ENCODE measurements at regions of chr16 and their contacts with region 1.

Region 1: DNA sequence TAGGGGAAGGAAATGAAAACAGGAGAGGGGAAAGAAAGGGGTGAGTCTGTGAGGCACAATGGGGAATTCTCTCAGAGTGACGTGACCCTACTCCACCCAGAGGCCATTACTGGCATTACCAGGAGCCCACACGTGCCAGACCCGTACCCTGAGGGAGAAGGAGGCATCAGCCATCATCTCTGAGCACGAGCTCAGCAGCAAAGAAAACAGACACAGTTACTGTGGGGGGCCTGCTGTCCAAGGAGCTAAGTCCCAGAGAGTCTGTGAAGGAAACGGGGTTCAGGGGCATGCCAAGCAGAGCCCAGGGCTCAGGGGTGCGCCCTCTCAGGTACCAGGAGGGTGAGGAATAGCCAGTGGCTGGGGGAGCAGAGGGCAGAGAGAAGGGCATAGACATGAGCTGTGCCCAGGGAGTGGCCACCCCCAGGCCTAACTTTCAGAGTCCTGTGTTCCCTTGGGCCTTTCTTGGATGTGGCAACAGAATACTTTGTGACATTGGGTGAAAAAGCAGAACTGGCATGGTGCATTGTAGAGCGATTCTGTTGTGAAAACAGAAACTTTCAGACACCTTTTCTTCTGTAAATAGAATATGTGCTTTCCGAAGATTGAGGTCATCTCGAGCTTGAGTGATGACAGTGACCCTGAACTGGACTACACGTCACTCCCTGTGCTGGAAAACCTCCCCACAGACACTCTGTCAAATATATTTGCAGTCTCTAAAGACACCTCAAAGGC is 11.3 kb downstream of the TAF1C start:
- DNase-seq: peak in 3 of 5 donors; percentile 51 to 78 (median 61)
- H3K4me3 ChIP-seq: no peak overlapping the region
- H3K27ac ChIP-seq: peak overlapping the region in 1 of 2 donors; percentile 44
- H3K4me1 ChIP-seq: peaks cover 16% of the 10 kb centered on the region
- H3K27me3 ChIP-seq: no peaks in the 10 kb centered on the region
- CTCF ChIP-seq: peak in 1 of 3 donors; percentile 68
- EP300 ChIP-seq: no peak
- POLR2A ChIP-seq: peak; percentile 16

Region 2: DNA sequence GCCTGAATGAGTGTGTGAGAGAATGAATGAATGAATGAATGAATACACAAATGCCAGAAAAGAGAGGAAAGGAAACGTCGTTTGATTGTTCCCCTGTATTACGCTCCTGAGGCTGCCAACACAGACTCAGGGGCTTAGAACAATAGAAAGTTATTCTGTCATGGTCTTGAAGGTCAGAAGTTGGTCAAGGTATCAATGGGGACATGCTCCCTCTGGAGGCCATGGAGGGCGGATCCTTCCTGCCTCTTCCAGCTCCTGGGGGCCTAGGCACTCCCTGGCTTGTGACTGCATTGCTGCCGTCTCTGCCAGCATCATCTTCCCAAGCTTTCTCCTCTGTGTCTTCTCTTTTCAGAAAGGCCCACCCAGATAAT is 131.4 kb before region 1 on chr16:
- intact Hi-C with region 1: no loop called
- DNase-seq: no peak
- H3K4me3 ChIP-seq: no peak overlapping the region
- H3K27ac ChIP-seq: no peak overlapping the region
- H3K4me1 ChIP-seq: no peaks in the 10 kb centered on the region
- H3K27me3 ChIP-seq: no peaks in the 10 kb centered on the region
- CTCF ChIP-seq: no peak
- EP300 ChIP-seq: no peak
- POLR2A ChIP-seq: no peak

Region 3: GRCh38 chr16:84084570-84085270 is 90.8 kb before region 1 on chr16:
- intact Hi-C with region 1: loop called (anchors 5 to 10 kb)
- DNase-seq: peak; percentile 48 to 65 (median 56)
- H3K4me3 ChIP-seq: no peak overlapping the region
- H3K27ac ChIP-seq: no peak overlapping the region
- H3K4me1 ChIP-seq: no peaks in the 10 kb centered on the region
- H3K27me3 ChIP-seq: no peaks in the 10 kb centered on the region
- CTCF ChIP-seq: peak; percentile 9 to 45 (median 33)
- EP300 ChIP-seq: no peak
- POLR2A ChIP-seq: no peak

Region 4: GRCh38 chr16:84132527-84133285 is 42.8 kb before region 1 on chr16:
- intact Hi-C with region 1: loop called in 1 of 4 experiments (anchors 5 kb)
- DNase-seq: no peak
- H3K4me3 ChIP-seq: no peak overlapping the region
- H3K27ac ChIP-seq: no peak overlapping the region
- H3K4me1 ChIP-seq: no peaks in the 10 kb centered on the region
- H3K27me3 ChIP-seq: no peaks in the 10 kb centered on the region
- CTCF ChIP-seq: no peak
- EP300 ChIP-seq: no peak
- POLR2A ChIP-seq: no peak

Measured in ovary (tissue), 10 donors.